ENCODE measurements at regions of chr17 and their contacts with region 1.

Region 1: GRCh38 chr17:72539981-72540897 is 419.4 kb downstream of the SOX9 start:
- DNase-seq: peak; percentile 79
- H3K4me3 ChIP-seq: peak overlapping the region in 2 of 4 donors; percentile 18 to 42
- H3K27ac ChIP-seq: peak overlapping the region; percentile 55 to 81 (median 78)
- H3K4me1 ChIP-seq: peaks cover 0 to 19% (median 18%) of the 10 kb centered on the region in 4 donors
- H3K27me3 ChIP-seq: no peaks in the 10 kb centered on the region
- CTCF ChIP-seq: peak; percentile 67 to 91 (median 88)
- EP300 ChIP-seq: no peak
- POLR2A ChIP-seq: no peak

Region 2: GRCh38 chr17:70636517-70637133 is 1903.6 kb before region 1 on chr17:
- in situ Hi-C with region 1: loop called in 3 of 4 experiments (anchors 10 to 25 kb)
- intact Hi-C with region 1: loop called (anchors 5 kb)
- DNase-seq: no peak
- H3K4me3 ChIP-seq: no peak overlapping the region
- H3K27ac ChIP-seq: no peak overlapping the region
- H3K4me1 ChIP-seq: no peaks in the 10 kb centered on the region
- H3K27me3 ChIP-seq: no peaks in the 10 kb centered on the region
- CTCF ChIP-seq: peak; percentile 78 to 91 (median 82)
- EP300 ChIP-seq: no peak
- POLR2A ChIP-seq: no peak

Region 3: DNA sequence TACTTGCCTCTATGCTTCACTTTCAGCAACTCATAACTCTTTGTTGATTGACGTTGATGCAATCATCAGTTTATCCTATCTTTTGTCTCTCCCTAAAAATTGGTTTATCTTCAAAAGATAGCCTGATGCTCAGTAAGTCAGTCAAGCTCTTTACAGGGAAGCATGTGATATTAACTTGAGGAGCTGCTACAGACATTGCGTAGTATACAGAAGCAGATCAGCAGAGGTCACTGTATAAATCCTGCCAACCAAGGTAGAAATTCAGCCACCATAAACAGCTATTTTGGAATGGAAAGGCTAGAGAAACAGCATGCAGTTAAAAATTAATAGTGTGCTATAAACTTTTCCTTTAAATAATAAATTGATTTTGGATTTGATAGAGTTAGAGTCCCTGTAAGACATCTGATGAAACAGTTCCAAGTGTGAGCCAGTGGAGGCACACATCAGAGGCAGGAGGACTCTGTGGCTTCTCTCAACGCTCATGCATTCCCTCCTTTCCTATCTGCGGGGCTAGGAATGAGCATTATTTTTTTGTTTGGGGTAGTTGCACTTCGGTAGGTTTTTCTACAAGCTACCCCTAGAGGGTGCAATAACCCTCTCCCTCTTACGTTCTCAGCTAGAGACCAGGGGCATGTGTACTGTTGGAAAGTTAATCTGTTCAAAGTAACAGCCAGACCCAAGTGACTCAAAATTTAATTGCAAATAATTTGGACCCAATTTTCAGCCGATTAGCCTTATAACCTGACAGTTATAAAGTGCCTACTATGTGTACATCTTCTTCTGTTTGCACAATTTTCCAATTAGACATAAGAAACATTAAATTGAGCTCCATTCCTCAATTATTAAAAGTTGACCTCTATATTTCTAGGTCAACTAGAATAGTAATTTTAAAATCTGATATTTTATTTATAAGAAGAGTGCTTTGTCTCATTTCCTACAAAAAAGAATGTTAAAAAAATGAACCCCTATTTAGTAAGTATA is 1067.1 kb before region 1 on chr17:
- in situ Hi-C with region 1: loop called in 3 of 4 experiments (anchors 25 kb)
- intact Hi-C with region 1: loop called (anchors 10 kb)
- DNase-seq: no peak
- H3K4me3 ChIP-seq: no peak overlapping the region
- H3K27ac ChIP-seq: no peak overlapping the region
- H3K4me1 ChIP-seq: peaks cover 0 to 5% (median 2%) of the 10 kb centered on the region in 4 donors
- H3K27me3 ChIP-seq: no peaks in the 10 kb centered on the region
- CTCF ChIP-seq: peak; percentile 52 to 66 (median 61)
- EP300 ChIP-seq: no peak
- POLR2A ChIP-seq: no peak

Region 4: GRCh38 chr17:72120642-72121163 is 419.5 kb before region 1 on chr17 and contains the start of gene SOX9:
- in situ Hi-C with region 1: loop called in 3 of 4 experiments (anchors 25 kb)
- intact Hi-C with region 1: loop called (anchors 5 kb)
- DNase-seq: peak; percentile 91
- H3K4me3 ChIP-seq: peak within 1 kb of the TSS; percentile 30 to 66 (median 58)
- H3K27ac ChIP-seq: peak within 1 kb of the TSS; percentile 75 to 88 (median 87)
- H3K4me1 ChIP-seq: peaks cover 0 to 57% (median 30%) of the 10 kb centered on the region in 4 donors
- H3K27me3 ChIP-seq: peaks cover 85% of the 10 kb centered on the region
- CTCF ChIP-seq: no peak
- EP300 ChIP-seq: no peak
- POLR2A ChIP-seq: peak; percentile 97
- total RNA-seq, gene SOX9: 35.2 to 55.7 (median 42.3) TPM

Region 5: GRCh38 chr17:72270273-72270950 is 269.8 kb before region 1 on chr17:
- in situ Hi-C with region 1: loop called in 1 of 4 experiments (anchors 25 kb)
- intact Hi-C with region 1: no loop called
- DNase-seq: no peak
- H3K4me3 ChIP-seq: no peak overlapping the region
- H3K27ac ChIP-seq: no peak overlapping the region
- H3K4me1 ChIP-seq: peaks cover 0 to 5% (median 0%) of the 10 kb centered on the region in 4 donors
- H3K27me3 ChIP-seq: peaks cover 9% of the 10 kb centered on the region
- CTCF ChIP-seq: no peak
- EP300 ChIP-seq: no peak
- POLR2A ChIP-seq: no peak

Measured in transverse colon (tissue), 4 donors.